Caco-2 (cell line): ENCODE measurements at regions of chr2 and their contacts with region 1.

Region 1: GRCh38 chr2:47767880-47768609 is 14.9 kb upstream of the MSH6 start:
- DNase-seq: peak; percentile 66 to 89
- H3K4me3 ChIP-seq: no peak overlapping the region
- H3K4me3 Mint-ChIP-seq: peak overlapping the region; percentile 36
- H3K27ac Mint-ChIP-seq: no peak overlapping the region
- H3K4me1 ChIP-seq: peaks cover 8% of the 10 kb centered on the region; the same call in 1 of the 2 replicates
- H3K4me1 Mint-ChIP-seq: peaks cover 6% of the 10 kb centered on the region
- H3K27me3 ChIP-seq: no peaks in the 10 kb centered on the region
- H3K27me3 Mint-ChIP-seq: no peaks in the 10 kb centered on the region
- CTCF ChIP-seq: peak; percentile 99

Region 2: DNA sequence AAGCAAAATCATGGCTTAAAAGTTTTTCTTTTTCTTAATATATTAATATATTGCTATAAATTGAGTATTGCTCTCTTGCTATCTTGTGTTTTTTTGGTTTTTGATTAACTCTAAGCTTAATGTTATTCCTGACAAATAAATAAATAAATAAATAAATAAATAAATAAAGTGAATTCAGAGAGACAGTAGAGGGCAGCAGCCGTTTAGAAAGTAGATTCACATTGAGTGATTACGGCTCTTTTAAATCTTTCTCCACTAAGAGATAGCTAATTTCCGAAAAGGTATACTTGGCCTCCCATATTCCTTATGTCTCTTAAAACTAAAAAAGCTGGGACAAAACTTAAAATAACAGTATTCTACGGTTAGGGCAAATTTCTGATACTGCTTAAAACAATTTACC is 330.8 kb before region 1 on chr2:
- CTCF ChIA-PET with region 1: interaction called, 10 read pairs
- POLR2A ChIA-PET with region 1: no interaction called
- intact Hi-C with region 1: loop called (anchors 1 kb)
- DNase-seq: peak in 1 of 2 experiments; percentile 12
- H3K4me3 ChIP-seq: no peak overlapping the region
- H3K4me3 Mint-ChIP-seq: no peak overlapping the region
- H3K27ac Mint-ChIP-seq: no peak overlapping the region
- H3K4me1 ChIP-seq: 0 out of 2 replicates have a peak, but pooled peaks cover 3% of the 10 kb centered on the region
- H3K4me1 Mint-ChIP-seq: no peaks in the 10 kb centered on the region
- H3K27me3 ChIP-seq: no peaks in the 10 kb centered on the region
- H3K27me3 Mint-ChIP-seq: no peaks in the 10 kb centered on the region
- CTCF ChIP-seq: peak in 1 of 2 experiments; percentile 36

Region 3: GRCh38 chr2:47569658-47570472 is 198.2 kb before region 1 on chr2:
- CTCF ChIA-PET with region 1: no interaction called
- POLR2A ChIA-PET with region 1: no interaction called
- intact Hi-C with region 1: loop called (anchors 5 kb)
- DNase-seq: peak in 1 of 2 experiments; percentile 26
- H3K4me3 ChIP-seq: peak overlapping the region; percentile 19; the same call in 1 of the 2 replicates
- H3K4me3 Mint-ChIP-seq: peak overlapping the region; percentile 75
- H3K27ac Mint-ChIP-seq: no peak overlapping the region
- H3K4me1 ChIP-seq: peaks cover 7% of the 10 kb centered on the region
- H3K4me1 Mint-ChIP-seq: peaks cover 13% of the 10 kb centered on the region
- H3K27me3 ChIP-seq: peaks cover 10% of the 10 kb centered on the region
- H3K27me3 Mint-ChIP-seq: peaks cover 37% of the 10 kb centered on the region
- CTCF ChIP-seq: no peak

Region 4: GRCh38 chr2:47644351-47644750 is 123.7 kb before region 1 on chr2:
- CTCF ChIA-PET with region 1: no interaction called
- POLR2A ChIA-PET with region 1: no interaction called
- intact Hi-C with region 1: no loop called
- DNase-seq: no peak
- H3K4me3 ChIP-seq: no peak overlapping the region
- H3K4me3 Mint-ChIP-seq: no peak overlapping the region
- H3K27ac Mint-ChIP-seq: no peak overlapping the region
- H3K4me1 ChIP-seq: peaks cover 5% of the 10 kb centered on the region; the same call in 1 of the 2 replicates
- H3K4me1 Mint-ChIP-seq: no peaks in the 10 kb centered on the region
- H3K27me3 ChIP-seq: no peaks in the 10 kb centered on the region
- H3K27me3 Mint-ChIP-seq: peaks cover 4% of the 10 kb centered on the region
- CTCF ChIP-seq: no peak

Region 5: DNA sequence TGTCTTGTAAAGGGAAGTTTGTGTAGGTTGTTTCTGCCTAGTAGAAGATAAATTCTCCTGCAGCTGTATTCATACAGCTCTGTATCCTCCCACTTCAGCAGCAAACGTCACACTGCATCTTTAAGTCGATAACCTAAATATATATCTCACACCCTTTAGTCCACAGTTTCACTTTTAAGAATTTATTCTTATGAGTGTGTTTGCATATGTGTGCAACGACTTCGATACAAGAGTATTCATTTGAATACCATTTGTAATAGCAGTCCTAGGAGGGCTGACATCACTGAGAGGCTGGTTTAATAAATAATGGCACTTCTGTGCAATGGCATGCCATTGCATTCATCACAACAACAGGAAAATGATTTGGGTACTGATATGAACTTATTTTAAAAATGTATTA is 48.9 kb before region 1 on chr2:
- CTCF ChIA-PET with region 1: no interaction called
- POLR2A ChIA-PET with region 1: no interaction called
- intact Hi-C with region 1: loop called (anchors 5 kb)
- DNase-seq: no peak
- H3K4me3 ChIP-seq: no peak overlapping the region
- H3K4me3 Mint-ChIP-seq: no peak overlapping the region
- H3K27ac Mint-ChIP-seq: no peak overlapping the region
- H3K4me1 ChIP-seq: no peaks in the 10 kb centered on the region
- H3K4me1 Mint-ChIP-seq: no peaks in the 10 kb centered on the region
- H3K27me3 ChIP-seq: no peaks in the 10 kb centered on the region
- H3K27me3 Mint-ChIP-seq: no peaks in the 10 kb centered on the region
- CTCF ChIP-seq: no peak

Region 6: GRCh38 chr2:47782671-47783485 is 14.8 kb after region 1 on chr2 and contains the start of gene MSH6:
- CTCF ChIA-PET with region 1: interaction called, 11 read pairs
- POLR2A ChIA-PET with region 1: no interaction called
- intact Hi-C with region 1: no loop called
- DNase-seq: peak; percentile 88 to 94
- H3K4me3 ChIP-seq: peak within 1 kb of the TSS; percentile 75
- H3K4me3 Mint-ChIP-seq: peak within 1 kb of the TSS; percentile 98
- H3K27ac Mint-ChIP-seq: peak within 1 kb of the TSS; percentile 99
- H3K4me1 ChIP-seq: peaks cover 4% of the 10 kb centered on the region; the same call in 1 of the 2 replicates
- H3K4me1 Mint-ChIP-seq: peaks cover 7% of the 10 kb centered on the region
- H3K27me3 ChIP-seq: no peaks in the 10 kb centered on the region
- H3K27me3 Mint-ChIP-seq: no peaks in the 10 kb centered on the region
- CTCF ChIP-seq: no peak
- total RNA-seq, gene MSH6: 93.8 and 108 TPM in 2 replicates

Region 7: GRCh38 chr2:47796090-47796697 is 28.1 kb after region 1 on chr2:
- CTCF ChIA-PET with region 1: no interaction called
- POLR2A ChIA-PET with region 1: no interaction called
- intact Hi-C with region 1: no loop called
- DNase-seq: no peak
- H3K4me3 ChIP-seq: no peak overlapping the region
- H3K4me3 Mint-ChIP-seq: no peak overlapping the region
- H3K27ac Mint-ChIP-seq: no peak overlapping the region
- H3K4me1 ChIP-seq: no peaks in the 10 kb centered on the region
- H3K4me1 Mint-ChIP-seq: no peaks in the 10 kb centered on the region
- H3K27me3 ChIP-seq: no peaks in the 10 kb centered on the region
- H3K27me3 Mint-ChIP-seq: no peaks in the 10 kb centered on the region
- CTCF ChIP-seq: no peak

Region 8: DNA sequence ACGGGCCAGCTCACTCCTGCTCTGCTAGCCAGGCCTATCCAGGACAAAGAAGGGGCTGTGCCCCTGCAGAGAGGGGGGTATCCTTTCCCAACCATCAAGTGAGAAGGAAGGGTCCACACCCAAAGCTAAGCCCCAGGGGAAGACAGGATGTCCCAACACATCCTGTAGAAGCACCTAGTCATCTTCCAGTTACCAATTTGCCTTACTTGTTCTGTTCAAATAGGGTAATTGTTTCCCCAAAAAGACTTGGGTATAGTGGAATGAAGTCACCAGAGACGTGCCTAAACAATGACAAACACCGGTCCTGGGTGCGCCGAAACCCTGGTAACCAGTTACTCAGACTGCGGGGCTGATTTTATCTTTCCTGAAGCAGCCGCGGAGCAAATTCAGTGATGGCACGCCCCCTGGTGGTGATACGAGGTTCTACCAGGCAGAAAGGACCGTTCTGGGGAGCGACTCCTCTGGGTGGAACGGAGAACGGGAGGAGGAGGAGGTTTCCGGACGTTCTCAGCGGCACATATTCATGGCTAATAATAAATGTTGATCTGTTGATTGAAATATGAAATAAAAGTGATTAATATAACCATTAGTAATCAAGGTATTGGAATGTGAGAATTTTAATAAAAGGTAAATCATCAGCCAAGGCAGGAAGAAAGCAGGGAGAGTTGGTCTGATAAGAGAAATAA is 652.6 kb after region 1 on chr2:
- CTCF ChIA-PET with region 1: no interaction called
- POLR2A ChIA-PET with region 1: no interaction called
- intact Hi-C with region 1: no loop called
- DNase-seq: peak; percentile 88 to 93
- H3K4me3 ChIP-seq: no peak overlapping the region
- H3K4me3 Mint-ChIP-seq: peak overlapping the region; percentile 56
- H3K27ac Mint-ChIP-seq: no peak overlapping the region
- H3K4me1 ChIP-seq: peaks cover 17% of the 10 kb centered on the region
- H3K4me1 Mint-ChIP-seq: peaks cover 27% of the 10 kb centered on the region
- H3K27me3 ChIP-seq: no peaks in the 10 kb centered on the region
- H3K27me3 Mint-ChIP-seq: no peaks in the 10 kb centered on the region
- CTCF ChIP-seq: peak; percentile 97 to 98